ENCODE measurements at regions of chr10 and their contacts with region 1.

Region 1: GRCh38 chr10:100518761-100519241 is 860 bp downstream of the SEC31B start:
- H3K4me3 ChIP-seq: no peak overlapping the region
- H3K27ac ChIP-seq: no peak overlapping the region
- H3K4me1 ChIP-seq: no peaks in the 10 kb centered on the region
- CTCF ChIP-seq: peak; percentile 39; the same call in 1 of the 2 replicates

Region 2: GRCh38 chr10:100303724-100304319 is 215.0 kb before region 1 on chr10:
- CTCF ChIA-PET with region 1: interaction called, 19 read pairs
- POLR2A ChIA-PET with region 1: no interaction called
- H3K4me3 ChIP-seq: no peak overlapping the region
- H3K27ac ChIP-seq: no peak overlapping the region
- H3K4me1 ChIP-seq: no peaks in the 10 kb centered on the region
- CTCF ChIP-seq: peak; percentile 28; the same call in 1 of the 2 replicates

Region 3: DNA sequence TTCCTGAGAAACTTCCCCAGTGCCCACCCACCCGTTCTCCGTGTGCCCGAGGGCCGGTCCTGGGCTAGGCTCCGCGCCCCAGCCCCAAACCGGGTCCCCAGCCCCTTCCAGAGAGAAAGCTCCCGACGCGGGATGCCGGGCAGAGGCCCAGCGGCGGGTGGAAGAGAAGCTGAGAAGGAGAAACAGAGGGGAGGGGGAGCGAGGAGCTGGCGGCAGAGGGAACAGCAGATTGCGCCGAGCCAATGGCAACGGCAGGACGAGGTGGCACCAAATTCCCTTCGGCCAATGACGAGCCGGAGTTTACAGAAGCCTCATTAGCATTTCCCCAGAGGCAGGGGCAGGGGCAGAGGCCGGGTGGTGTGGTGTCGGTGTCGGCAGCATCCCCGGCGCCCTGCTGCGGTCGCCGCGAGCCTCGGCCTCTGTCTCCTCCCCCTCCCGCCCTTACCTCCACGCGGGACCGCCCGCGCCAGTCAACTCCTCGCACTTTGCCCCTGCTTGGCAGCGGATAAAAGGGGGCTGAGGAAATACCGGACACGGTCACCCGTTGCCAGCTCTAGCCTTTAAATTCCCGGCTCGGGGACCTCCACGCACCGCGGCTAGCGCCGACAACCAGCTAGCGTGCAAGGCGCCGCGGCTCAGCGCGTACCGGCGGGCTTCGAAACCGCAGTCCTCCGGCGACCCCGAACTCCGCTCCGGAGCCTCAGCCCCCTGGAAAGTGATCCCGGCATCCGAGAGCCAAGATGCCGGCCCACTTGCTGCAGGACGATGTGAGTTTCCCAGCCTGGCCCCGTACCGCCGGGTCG is 171.8 kb before region 1 on chr10 and contains the start of gene SCD:
- CTCF ChIA-PET with region 1: interaction called, 34 read pairs
- POLR2A ChIA-PET with region 1: interaction called, 12 read pairs
- H3K4me3 ChIP-seq: peak within 1 kb of the TSS; percentile 77
- H3K27ac ChIP-seq: peak within 1 kb of the TSS; percentile 99
- H3K4me1 ChIP-seq: peaks cover 21% of the 10 kb centered on the region
- CTCF ChIP-seq: no peak

Region 4: GRCh38 chr10:100481462-100482081 is 37.2 kb before region 1 on chr10:
- CTCF ChIA-PET with region 1: interaction called, 34 read pairs
- POLR2A ChIA-PET with region 1: interaction called, 3 read pairs
- H3K4me3 ChIP-seq: peak overlapping the region; percentile 40
- H3K27ac ChIP-seq: no peak overlapping the region; the same call in 1 of the 2 replicates
- H3K4me1 ChIP-seq: peaks cover 8% of the 10 kb centered on the region
- CTCF ChIP-seq: peak; percentile 29; the same call in 1 of the 2 replicates

Region 5: DNA sequence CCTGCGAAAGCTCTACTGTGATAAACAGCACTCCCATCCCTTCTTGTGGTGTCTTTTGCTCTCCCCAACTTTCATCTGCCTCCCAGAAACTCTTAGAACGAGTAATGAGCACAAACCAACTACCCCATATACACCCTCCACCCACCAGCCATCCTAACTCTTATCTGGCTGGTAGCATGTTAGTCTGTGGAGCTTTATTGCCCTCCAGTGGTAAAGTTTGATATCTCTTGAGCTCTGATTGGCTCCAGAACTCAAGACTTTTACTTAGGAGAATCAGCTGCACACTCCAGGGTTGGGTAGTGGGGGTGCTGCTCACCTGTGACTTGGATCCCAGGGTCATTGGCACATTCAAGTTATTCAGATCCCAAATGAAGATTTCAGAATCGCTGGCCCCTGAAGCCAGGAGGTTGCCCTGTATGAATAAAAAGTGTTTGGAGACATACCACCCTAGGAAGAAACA is 10.1 kb before region 1 on chr10:
- CTCF ChIA-PET with region 1: interaction called, 53 read pairs
- POLR2A ChIA-PET with region 1: no interaction called
- H3K4me3 ChIP-seq: no peak overlapping the region
- H3K27ac ChIP-seq: no peak overlapping the region
- H3K4me1 ChIP-seq: no peaks in the 10 kb centered on the region
- CTCF ChIP-seq: peak; percentile 69

Region 6: GRCh38 chr10:100535715-100536353 is 17.0 kb after region 1 on chr10 and contains the start of gene HIF1AN:
- CTCF ChIA-PET with region 1: interaction called, 45 read pairs
- POLR2A ChIA-PET with region 1: interaction called, 7 read pairs
- H3K4me3 ChIP-seq: peak within 1 kb of the TSS; percentile 79
- H3K27ac ChIP-seq: peak within 1 kb of the TSS; percentile 21; the same call in 1 of the 2 replicates
- H3K4me1 ChIP-seq: peaks cover 15% of the 10 kb centered on the region
- CTCF ChIP-seq: peak; percentile 99

Region 7: GRCh38 chr10:100866575-100867098 is 347.8 kb after region 1 on chr10:
- CTCF ChIA-PET with region 1: no interaction called
- POLR2A ChIA-PET with region 1: no interaction called
- H3K4me3 ChIP-seq: no peak overlapping the region
- H3K27ac ChIP-seq: no peak overlapping the region
- H3K4me1 ChIP-seq: no peaks in the 10 kb centered on the region; the same call in 1 of the 2 replicates
- CTCF ChIP-seq: no peak